GM18951 (cell line): ENCODE measurements at regions of chr6 and their contacts with region 1.

Region 1: GRCh38 chr6:131116749-131117360 is 18.4 kb upstream of the AKAP7 start:
- POLR2A ChIP-seq: no peak

Region 2: GRCh38 chr6:130625825-130626527 is 490.9 kb before region 1 on chr6:
- in situ Hi-C with region 1: no loop called
- POLR2A ChIP-seq: no peak

Region 3: GRCh38 chr6:130885392-130886192 is 231.3 kb before region 1 on chr6:
- in situ Hi-C with region 1: loop called (anchors 5 kb)
- POLR2A ChIP-seq: no peak

Region 4: DNA sequence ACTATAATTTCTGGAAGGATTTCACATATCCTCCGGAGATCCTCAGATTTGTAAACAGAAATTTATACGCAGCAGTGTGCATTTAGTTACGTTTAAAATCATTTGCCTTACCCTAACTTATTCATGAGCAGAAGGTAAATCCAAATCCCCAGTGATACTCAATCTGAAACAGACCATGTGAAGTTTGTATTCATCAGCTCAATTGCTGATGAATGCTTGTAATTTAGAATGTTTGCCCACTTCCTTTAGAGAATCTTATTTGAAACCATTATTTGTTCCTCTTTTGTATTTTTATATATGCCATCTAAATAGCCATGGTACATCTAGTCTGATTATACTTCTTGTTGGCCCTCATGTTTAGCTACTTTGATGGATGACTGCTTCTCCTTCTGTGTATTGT is 1526.7 kb after region 1 on chr6:
- in situ Hi-C with region 1: no loop called
- POLR2A ChIP-seq: no peak